Activated CD4-positive, alpha-beta T cell treated with anti-CD3 and anti-CD28 coated beads for 36 hours (primary cell): ENCODE measurements at regions of chr12 and their contacts with region 1.

Region 1: GRCh38 chr12:2682296-2683251 is 112.2 kb upstream of the FKBP4 start:
- DNase-seq: peak; percentile 62
- ATAC-seq: peak; percentile 74
- H3K4me3 Mint-ChIP-seq: no peak overlapping the region
- H3K27ac Mint-ChIP-seq: peak overlapping the region; percentile 86
- H3K4me1 Mint-ChIP-seq: peaks cover 6% of the 10 kb centered on the region
- H3K27me3 Mint-ChIP-seq: no peaks in the 10 kb centered on the region

Region 2: GRCh38 chr12:1297206-1297605 is 1385.4 kb before region 1 on chr12:
- CTCF ChIA-PET with region 1: no interaction called
- POLR2A ChIA-PET with region 1: no interaction called
- intact Hi-C with region 1: no loop called
- DNase-seq: no peak
- ATAC-seq: no peak
- H3K4me3 Mint-ChIP-seq: no peak overlapping the region
- H3K27ac Mint-ChIP-seq: no peak overlapping the region
- H3K4me1 Mint-ChIP-seq: no peaks in the 10 kb centered on the region
- H3K27me3 Mint-ChIP-seq: no peaks in the 10 kb centered on the region

Region 3: DNA sequence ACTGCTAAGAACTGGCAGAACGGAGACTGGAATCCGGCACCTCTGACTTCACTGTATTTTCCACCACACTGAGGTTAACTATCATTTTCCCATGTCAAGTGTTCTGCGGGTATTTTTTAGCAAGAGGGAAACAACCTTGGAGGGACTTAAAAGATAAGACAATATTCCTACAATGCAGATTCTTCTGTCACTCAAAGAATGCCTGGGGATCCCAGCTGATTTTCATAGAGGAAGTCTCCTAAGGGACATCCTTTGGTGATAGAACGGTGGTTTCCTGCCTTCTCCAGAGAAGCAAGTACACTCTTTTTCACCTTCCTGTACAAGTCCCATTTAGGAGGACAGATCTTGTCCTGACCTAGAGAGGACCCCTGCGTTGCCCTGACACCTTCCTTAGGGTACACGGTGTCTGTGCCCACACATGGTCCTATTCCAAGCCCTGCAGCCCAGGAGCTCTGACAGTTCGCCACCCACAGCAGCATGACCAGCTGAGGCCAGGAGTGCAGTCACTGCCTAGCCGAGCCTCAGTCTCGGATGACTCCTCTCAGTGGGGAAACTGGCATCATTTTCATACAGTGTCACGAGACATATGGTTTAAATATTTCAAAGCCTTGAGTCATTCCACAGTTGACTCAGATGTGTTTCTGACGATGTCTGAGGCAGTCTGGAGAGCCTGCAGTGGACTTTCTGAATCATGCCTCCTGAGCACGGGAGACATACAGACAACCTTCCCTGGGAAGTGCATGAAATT is 69.1 kb before region 1 on chr12:
- CTCF ChIA-PET with region 1: no interaction called
- POLR2A ChIA-PET with region 1: no interaction called
- intact Hi-C with region 1: loop called in 1 of 2 experiments (anchors 2 kb)
- DNase-seq: peak; percentile 78
- ATAC-seq: peak; percentile 99
- H3K4me3 Mint-ChIP-seq: no peak overlapping the region
- H3K27ac Mint-ChIP-seq: no peak overlapping the region
- H3K4me1 Mint-ChIP-seq: peaks cover 13% of the 10 kb centered on the region
- H3K27me3 Mint-ChIP-seq: peaks cover 36% of the 10 kb centered on the region

Region 4: GRCh38 chr12:2752676-2753371 is 70.2 kb after region 1 on chr12:
- CTCF ChIA-PET with region 1: no interaction called
- POLR2A ChIA-PET with region 1: no interaction called
- intact Hi-C with region 1: loop called in 1 of 2 experiments (anchors 1 kb)
- DNase-seq: peak; percentile 92
- ATAC-seq: peak; percentile 99
- H3K4me3 Mint-ChIP-seq: no peak overlapping the region
- H3K27ac Mint-ChIP-seq: no peak overlapping the region
- H3K4me1 Mint-ChIP-seq: no peaks in the 10 kb centered on the region
- H3K27me3 Mint-ChIP-seq: peaks cover 22% of the 10 kb centered on the region

Region 5: GRCh38 chr12:2783936-2784600 is 101.5 kb after region 1 on chr12:
- CTCF ChIA-PET with region 1: interaction called, 24 read pairs
- POLR2A ChIA-PET with region 1: no interaction called
- intact Hi-C with region 1: loop called (anchors 1 kb)
- DNase-seq: peak; percentile 66
- ATAC-seq: peak; percentile 90
- H3K4me3 Mint-ChIP-seq: peak overlapping the region; percentile 62
- H3K27ac Mint-ChIP-seq: no peak overlapping the region
- H3K4me1 Mint-ChIP-seq: peaks cover 8% of the 10 kb centered on the region
- H3K27me3 Mint-ChIP-seq: peaks cover 12% of the 10 kb centered on the region